B cell (primary cell): ENCODE measurements at regions of chr14 and their contacts with region 1.

Region 1: GRCh38 chr14:77320238-77320935 is at the start of gene POMT2:
- DNase-seq: peak; percentile 96
- ATAC-seq: peak; percentile 56
- H3K4me3 ChIP-seq: peak within 1 kb of the TSS; percentile 59 to 99 (median 93)
- H3K4me3 Mint-ChIP-seq: peak within 1 kb of the TSS; percentile 100
- H3K27ac ChIP-seq: peak within 1 kb of the TSS; percentile 89 to 92
- H3K27ac Mint-ChIP-seq: peak within 1 kb of the TSS; percentile 100
- H3K4me1 ChIP-seq: peaks cover 10 to 16% of the 10 kb centered on the region in 2 donors
- H3K4me1 Mint-ChIP-seq: peaks cover 18% of the 10 kb centered on the region
- H3K27me3 ChIP-seq: no peaks in the 10 kb centered on the region
- H3K27me3 Mint-ChIP-seq: no peaks in the 10 kb centered on the region
- CTCF ChIP-seq: peak; percentile 43
- total RNA-seq, gene POMT2: 36.6 and 44.1 TPM in 2 replicates

Region 2: GRCh38 chr14:77376771-77377501 is 56.5 kb after region 1 on chr14 and contains the starts of genes SAMD15 and TMED8:
- CTCF ChIA-PET with region 1: interaction called, 17 read pairs
- POLR2A ChIA-PET with region 1: interaction called, 28 read pairs
- intact Hi-C with region 1: loop called (anchors 1 kb)
- DNase-seq: peak; percentile 92
- ATAC-seq: peak; percentile 92
- H3K4me3 ChIP-seq: peak within 1 kb of the TSS; percentile 79 to 100 (median 93)
- H3K4me3 Mint-ChIP-seq: peak within 1 kb of the TSS; percentile 95
- H3K27ac ChIP-seq: peak within 1 kb of the TSS; percentile 18 to 85
- H3K27ac Mint-ChIP-seq: peak within 1 kb of the TSS; percentile 91
- H3K4me1 ChIP-seq: peaks cover 39 to 43% of the 10 kb centered on the region in 2 donors
- H3K4me1 Mint-ChIP-seq: peaks cover 40% of the 10 kb centered on the region
- H3K27me3 ChIP-seq: no peaks in the 10 kb centered on the region
- H3K27me3 Mint-ChIP-seq: no peaks in the 10 kb centered on the region
- CTCF ChIP-seq: peak; percentile 48
- total RNA-seq, gene SAMD15: 0.96 and 1.00 TPM in 2 replicates
- total RNA-seq, gene TMED8: 43.8 and 44.7 TPM in 2 replicates

Region 3: DNA sequence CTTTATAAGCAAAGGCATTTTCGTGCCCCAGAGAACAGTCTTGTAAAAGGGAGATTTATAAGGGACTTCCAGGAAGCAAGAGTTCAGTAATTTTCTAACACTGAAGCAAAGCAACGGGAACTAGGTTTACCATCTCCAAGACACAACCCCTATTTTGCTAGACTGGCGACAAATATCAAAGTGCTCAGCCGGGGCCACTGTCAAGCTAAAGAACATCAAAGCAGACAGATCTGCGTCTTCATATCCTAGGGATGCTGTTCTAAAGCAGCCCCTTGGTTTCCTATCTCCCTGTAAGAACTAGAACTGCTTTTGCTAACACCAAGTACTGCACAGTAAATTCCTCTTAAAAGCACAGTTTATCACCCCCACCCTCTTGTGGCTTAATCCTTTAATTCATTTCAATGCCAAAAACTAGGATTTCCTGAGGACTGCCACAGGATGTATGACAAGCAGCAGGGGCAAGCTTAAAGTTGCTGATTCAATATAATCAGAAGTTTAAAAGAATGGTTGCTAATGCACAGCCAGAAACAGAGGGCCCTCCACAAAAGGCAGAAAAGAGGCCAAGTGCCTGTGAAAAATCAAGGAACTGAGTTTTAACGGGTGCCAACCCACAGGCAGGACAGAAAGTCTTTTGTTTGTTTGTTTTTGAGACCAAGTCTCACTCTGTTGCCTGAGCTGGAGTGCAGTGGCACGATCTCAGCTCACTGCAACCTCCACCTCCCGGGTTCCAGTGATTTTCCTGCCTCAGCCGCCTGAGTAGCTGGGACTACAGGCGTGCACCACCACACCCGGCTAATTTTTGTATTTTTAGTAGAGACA is 222.2 kb after region 1 on chr14:
- CTCF ChIA-PET with region 1: no interaction called
- POLR2A ChIA-PET with region 1: no interaction called
- intact Hi-C with region 1: no loop called
- DNase-seq: no peak
- ATAC-seq: no peak
- H3K4me3 ChIP-seq: no peak overlapping the region
- H3K4me3 Mint-ChIP-seq: peak overlapping the region; percentile 42
- H3K27ac ChIP-seq: peak overlapping the region; percentile 37 to 81
- H3K27ac Mint-ChIP-seq: peak overlapping the region; percentile 84
- H3K4me1 ChIP-seq: peaks cover 29 to 34% of the 10 kb centered on the region in 2 donors
- H3K4me1 Mint-ChIP-seq: peaks cover 29% of the 10 kb centered on the region
- H3K27me3 ChIP-seq: no peaks in the 10 kb centered on the region
- H3K27me3 Mint-ChIP-seq: no peaks in the 10 kb centered on the region
- CTCF ChIP-seq: no peak